Activated T-helper 1 cell treated with anti-CD3 and anti-CD28 coated beads, Interleukin-12 subunit alpha, Interleukin-12 subunit beta, Interleukin-2, Interleukin-4 antibody, amounts not matched to agents 30 ng/mL and 10 ng/mL and 1 ng/mL, durations not matched to agents 14 hours and 24 hours and 36 hours (primary cell): ENCODE measurements at regions of chr14 and their contacts with region 1.

Region 1: GRCh38 chr14:105045710-105046326 is 19.4 kb downstream of the GPR132 start:
- DNase-seq: peak; percentile 88
- H3K4me3 Mint-ChIP-seq: no peak overlapping the region
- H3K27ac Mint-ChIP-seq: peak overlapping the region; percentile 32
- H3K4me1 Mint-ChIP-seq: peaks cover 16% of the 10 kb centered on the region
- H3K27me3 Mint-ChIP-seq: no peaks in the 10 kb centered on the region

Region 2: GRCh38 chr14:104715422-104715821 is 330.4 kb before region 1 on chr14:
- intact Hi-C with region 1: no loop called
- DNase-seq: no peak
- H3K4me3 Mint-ChIP-seq: no peak overlapping the region
- H3K27ac Mint-ChIP-seq: no peak overlapping the region
- H3K4me1 Mint-ChIP-seq: no peaks in the 10 kb centered on the region
- H3K27me3 Mint-ChIP-seq: no peaks in the 10 kb centered on the region

Region 3: DNA sequence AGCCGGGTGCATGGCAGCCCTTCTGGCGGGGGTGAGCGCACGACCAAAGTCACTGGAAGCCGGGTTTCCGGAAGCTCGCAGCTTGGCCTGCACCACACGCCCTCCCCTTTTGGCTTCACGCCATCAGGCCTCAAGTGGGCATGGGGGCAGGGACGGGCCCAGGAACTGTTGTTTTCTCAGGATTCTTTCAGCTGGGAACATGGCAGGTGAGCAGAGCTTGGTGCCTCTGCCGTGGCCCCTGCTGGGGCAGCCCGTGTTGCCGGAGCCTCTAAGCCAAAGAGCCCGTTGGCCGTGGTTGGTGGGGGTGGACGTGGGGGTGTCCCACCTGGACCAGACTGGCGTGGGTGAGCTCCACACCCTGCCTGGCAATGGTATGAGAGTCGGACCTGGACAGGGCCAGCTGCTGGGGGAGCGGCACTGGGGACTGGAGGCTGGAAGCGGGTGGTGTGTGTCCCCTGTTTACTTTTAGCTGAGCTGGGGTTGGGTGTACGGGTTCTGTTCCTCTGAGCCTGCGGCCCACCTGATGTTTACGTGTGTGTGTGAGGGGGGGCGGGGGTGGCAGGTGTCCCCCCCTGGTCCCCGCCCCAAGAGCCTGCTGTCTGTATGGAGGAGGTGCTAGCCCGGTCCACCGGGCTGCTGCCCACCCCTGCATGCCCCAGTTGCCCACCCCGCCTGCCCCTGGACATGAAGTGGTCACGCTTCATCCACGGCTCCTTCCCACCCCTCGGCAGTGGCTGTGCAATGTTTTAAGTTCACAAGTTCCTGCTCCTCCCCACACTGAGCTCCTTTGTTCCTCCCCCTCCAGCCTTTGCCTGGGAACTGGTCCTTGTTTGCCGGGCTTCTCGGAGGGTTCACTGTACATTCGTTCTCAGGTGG is 149.8 kb before region 1 on chr14:
- intact Hi-C with region 1: loop called (anchors 5 kb)
- DNase-seq: no peak
- H3K4me3 Mint-ChIP-seq: no peak overlapping the region
- H3K27ac Mint-ChIP-seq: no peak overlapping the region
- H3K4me1 Mint-ChIP-seq: no peaks in the 10 kb centered on the region
- H3K27me3 Mint-ChIP-seq: peaks cover 8% of the 10 kb centered on the region

Region 4: DNA sequence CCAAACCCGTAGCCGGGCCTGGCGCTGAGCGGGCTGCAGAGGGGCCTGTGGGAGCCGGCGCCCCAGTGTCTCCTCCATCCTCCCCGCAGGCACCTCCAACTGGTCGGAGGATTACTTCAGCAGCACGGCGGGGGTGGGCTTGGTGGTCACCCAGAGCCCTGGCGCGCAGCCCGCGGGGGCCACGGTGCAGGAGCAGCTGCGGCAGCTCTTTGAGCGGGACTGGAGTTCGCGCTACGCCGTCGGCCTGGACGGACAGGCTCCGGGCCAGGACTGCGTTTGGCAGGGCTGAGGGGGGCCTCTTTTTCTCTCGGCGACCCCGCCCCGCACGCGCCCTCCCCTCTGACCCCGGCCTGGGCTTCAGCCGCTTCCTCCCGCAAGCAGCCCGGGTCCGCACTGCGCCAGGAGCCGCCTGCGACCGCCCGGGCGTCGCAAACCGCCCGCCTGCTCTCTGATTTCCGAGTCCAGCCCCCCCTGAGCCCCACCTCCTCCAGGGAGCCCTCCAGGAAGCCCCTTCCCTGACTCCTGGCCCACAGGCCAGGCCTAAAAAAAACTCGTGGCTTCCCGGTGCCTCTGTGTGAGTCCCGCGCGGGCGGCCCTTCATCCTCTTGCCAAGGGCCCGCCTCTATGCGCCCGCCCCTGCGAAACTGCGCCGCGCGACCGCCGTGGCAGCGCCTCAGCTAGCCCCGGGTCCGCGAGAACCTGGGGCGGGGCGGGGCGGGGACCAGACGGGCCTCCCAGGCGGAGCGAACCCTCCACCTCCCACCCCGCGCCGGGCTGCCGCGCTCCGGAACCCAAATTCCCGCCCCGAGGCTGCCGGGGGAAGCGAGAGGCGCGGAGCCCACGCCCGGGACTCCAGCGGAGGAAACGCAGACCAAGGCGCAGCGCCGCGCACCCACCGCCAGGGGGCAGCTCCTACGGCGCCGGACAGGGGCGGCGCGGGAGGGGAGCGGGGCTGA is 112.9 kb before region 1 on chr14:
- intact Hi-C with region 1: loop called (anchors 1 kb)
- DNase-seq: peak; percentile 84
- H3K4me3 Mint-ChIP-seq: peak overlapping the region; percentile 49
- H3K27ac Mint-ChIP-seq: no peak overlapping the region
- H3K4me1 Mint-ChIP-seq: peaks cover 5% of the 10 kb centered on the region
- H3K27me3 Mint-ChIP-seq: peaks cover 7% of the 10 kb centered on the region

Region 5: GRCh38 chr14:104976198-104977007 is 69.4 kb before region 1 on chr14:
- intact Hi-C with region 1: loop called (anchors 1 kb)
- DNase-seq: peak; percentile 77
- H3K4me3 Mint-ChIP-seq: peak overlapping the region; percentile 64
- H3K27ac Mint-ChIP-seq: peak overlapping the region; percentile 35
- H3K4me1 Mint-ChIP-seq: peaks cover 11% of the 10 kb centered on the region
- H3K27me3 Mint-ChIP-seq: peaks cover 24% of the 10 kb centered on the region

Region 6: DNA sequence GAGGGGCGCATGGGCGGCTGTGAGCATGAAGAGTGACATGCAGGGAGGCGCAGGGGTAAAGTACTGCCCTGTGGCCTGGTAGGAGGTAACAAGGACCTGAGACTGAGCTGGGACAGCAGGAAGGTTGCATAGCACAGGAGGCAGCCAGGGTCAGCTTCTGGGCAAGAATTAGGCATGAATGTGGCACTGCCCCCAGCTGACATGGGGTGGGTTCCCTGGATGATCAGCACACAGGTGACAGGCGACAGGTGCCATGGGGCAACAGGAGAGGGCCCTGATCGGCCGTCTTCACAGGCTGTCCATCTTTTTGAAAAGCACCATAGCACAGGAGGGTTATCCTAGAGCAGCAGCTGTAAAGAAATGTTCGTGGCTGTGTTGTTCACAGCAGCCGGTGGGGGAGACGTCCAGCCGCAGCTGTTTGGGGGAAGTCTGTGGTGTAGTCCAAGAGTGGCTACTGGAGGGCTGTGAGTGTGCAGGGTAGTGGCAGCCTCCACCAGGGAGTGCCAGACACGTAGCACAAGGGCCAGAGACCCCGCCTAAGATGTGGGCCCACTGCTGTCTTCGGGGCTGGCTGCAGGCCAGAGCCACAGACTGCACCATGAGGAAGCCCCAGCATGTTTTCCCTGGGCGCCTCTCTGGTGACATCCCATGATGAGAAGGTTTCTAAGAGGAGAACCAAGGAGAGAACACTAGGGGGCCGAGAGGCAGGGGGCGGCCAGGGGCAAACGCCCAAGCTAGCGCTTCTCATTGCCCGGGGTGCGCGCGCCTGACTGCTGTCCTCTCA is 51.8 kb before region 1 on chr14:
- intact Hi-C with region 1: no loop called
- DNase-seq: no peak
- H3K4me3 Mint-ChIP-seq: no peak overlapping the region
- H3K27ac Mint-ChIP-seq: no peak overlapping the region
- H3K4me1 Mint-ChIP-seq: no peaks in the 10 kb centered on the region
- H3K27me3 Mint-ChIP-seq: no peaks in the 10 kb centered on the region

Region 7: GRCh38 chr14:105012171-105012985 is 33.4 kb before region 1 on chr14:
- intact Hi-C with region 1: loop called (anchors 5 kb)
- DNase-seq: no peak
- H3K4me3 Mint-ChIP-seq: no peak overlapping the region
- H3K27ac Mint-ChIP-seq: no peak overlapping the region
- H3K4me1 Mint-ChIP-seq: peaks cover 42% of the 10 kb centered on the region
- H3K27me3 Mint-ChIP-seq: no peaks in the 10 kb centered on the region

Region 8: GRCh38 chr14:105020815-105021655 is 24.8 kb before region 1 on chr14 and contains the start of gene CDCA4:
- intact Hi-C with region 1: loop called (anchors 1 kb)
- DNase-seq: peak; percentile 97
- H3K4me3 Mint-ChIP-seq: peak within 1 kb of the TSS; percentile 99
- H3K27ac Mint-ChIP-seq: peak within 1 kb of the TSS; percentile 86
- H3K4me1 Mint-ChIP-seq: peaks cover 72% of the 10 kb centered on the region
- H3K27me3 Mint-ChIP-seq: no peaks in the 10 kb centered on the region
- total RNA-seq, gene CDCA4: 62.5 and 63.7 TPM in 2 replicates

Region 9: DNA sequence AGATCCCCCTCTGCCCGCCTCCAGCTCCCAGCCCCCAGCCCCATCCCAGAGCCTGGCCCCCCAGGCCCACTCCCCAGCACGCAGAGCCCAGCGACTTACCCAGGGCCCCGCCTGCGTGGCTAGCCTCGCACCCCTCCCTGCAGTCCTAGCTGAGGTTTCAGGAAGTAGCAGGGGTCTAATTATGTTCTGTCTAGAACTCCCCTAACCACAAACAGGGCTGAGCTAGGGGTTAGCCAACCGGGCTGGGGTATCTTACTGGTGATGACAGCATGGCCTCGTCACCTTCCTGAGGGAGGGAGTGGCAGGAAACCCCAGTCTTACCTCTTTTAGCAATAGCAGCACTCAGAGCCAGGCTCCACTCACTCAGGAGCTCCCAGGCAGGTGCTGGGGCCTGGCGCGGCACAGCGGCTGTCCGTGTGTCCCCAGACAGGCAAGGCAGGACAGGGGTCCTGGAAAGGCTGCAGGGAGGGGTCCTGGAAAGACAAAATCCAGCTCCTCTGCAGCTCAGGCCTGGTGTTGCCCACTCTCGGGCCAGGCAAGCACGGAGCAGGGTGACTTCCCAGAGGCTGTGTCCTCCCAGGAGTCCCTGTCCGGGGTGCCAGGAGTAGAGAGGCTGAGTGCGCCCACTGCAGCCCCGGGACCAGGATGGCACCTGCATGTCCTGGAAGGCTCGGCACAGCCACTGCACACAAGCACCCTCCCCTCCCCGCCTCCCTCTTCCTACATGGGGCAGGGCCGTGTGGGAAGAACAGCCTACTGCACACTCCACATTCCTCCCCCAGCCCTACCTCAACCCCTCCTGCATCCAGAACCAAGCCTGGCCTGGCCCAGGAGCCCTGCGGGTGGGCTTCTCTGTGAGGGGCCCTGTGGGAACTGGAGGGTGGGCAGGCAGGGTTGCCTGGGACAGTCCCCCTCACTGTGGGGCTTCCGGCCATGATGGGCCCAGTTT is 19.7 kb after region 1 on chr14 and contains the start of gene GPR132:
- intact Hi-C with region 1: loop called (anchors 1 kb)
- DNase-seq: peak; percentile 89
- H3K4me3 Mint-ChIP-seq: peak within 1 kb of the TSS; percentile 89
- H3K27ac Mint-ChIP-seq: peak within 1 kb of the TSS; percentile 90
- H3K4me1 Mint-ChIP-seq: peaks cover 62% of the 10 kb centered on the region
- H3K27me3 Mint-ChIP-seq: no peaks in the 10 kb centered on the region
- total RNA-seq, gene GPR132: 24.6 and 24.9 TPM in 2 replicates